CD4-positive, alpha-beta T cell (primary cell): ENCODE measurements at regions of chr9 and their contacts with region 1.

Region 1: DNA sequence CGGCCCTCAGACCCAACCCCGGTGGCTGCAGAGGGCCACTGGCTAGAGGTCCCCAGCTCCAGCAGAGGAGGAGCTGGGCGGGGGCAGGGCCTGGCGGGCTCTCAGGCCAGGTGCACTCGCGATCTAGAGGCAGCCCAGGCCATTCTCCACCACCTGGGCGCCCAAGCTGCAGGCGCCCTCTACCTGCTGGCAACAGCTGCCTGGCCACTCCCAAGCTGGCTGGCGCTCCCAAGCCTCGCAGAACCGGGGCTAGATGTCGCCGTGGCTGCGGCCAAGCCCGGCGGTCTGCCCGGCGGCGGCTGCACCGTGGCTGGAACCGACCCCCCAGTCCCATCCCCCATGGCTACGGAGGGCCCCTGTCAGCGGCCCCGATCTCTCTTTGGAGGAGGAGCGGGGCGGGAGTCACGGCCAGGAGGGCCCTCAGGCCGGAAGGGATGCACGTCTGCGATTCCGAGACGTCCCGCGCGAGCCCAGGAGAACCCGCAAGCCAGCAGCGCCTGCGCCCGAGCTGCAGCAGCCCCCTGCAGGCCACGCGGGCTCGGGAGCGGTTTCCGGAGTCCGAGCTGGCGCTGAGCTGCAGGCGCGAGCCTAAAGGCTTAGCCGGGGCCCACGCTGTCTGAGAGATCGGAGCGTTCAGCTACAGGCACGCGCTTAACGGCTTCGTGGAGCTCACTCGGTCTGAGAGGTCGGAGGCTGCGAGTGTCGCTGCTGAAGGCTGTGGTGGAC is 44.3 kb upstream of the BICD2 start:
- DNase-seq: peak; percentile 17 to 72 (median 38)
- ATAC-seq: peak; percentile 63
- H3K4me3 ChIP-seq: peak overlapping the region; percentile 49
- H3K4me3 Mint-ChIP-seq: peak overlapping the region; percentile 91
- H3K27ac ChIP-seq: no peak overlapping the region
- H3K27ac Mint-ChIP-seq: no peak overlapping the region
- H3K4me1 ChIP-seq: peaks cover 32% of the 10 kb centered on the region
- H3K4me1 Mint-ChIP-seq: peaks cover 14% of the 10 kb centered on the region
- H3K27me3 ChIP-seq: peaks cover 45 to 70% of the 10 kb centered on the region in 2 experiments
- H3K27me3 Mint-ChIP-seq: peaks cover 68% of the 10 kb centered on the region
- CTCF ChIP-seq: no peak

Region 2: GRCh38 chr9:92680166-92681119 is 128.4 kb before region 1 on chr9:
- CTCF ChIA-PET with region 1: no interaction called
- POLR2A ChIA-PET with region 1: no interaction called
- intact Hi-C with region 1: no loop called
- DNase-seq: no peak
- ATAC-seq: no peak
- H3K4me3 ChIP-seq: no peak overlapping the region
- H3K4me3 Mint-ChIP-seq: no peak overlapping the region
- H3K27ac ChIP-seq: no peak overlapping the region
- H3K27ac Mint-ChIP-seq: no peak overlapping the region
- H3K4me1 ChIP-seq: no peaks in the 10 kb centered on the region
- H3K4me1 Mint-ChIP-seq: peaks cover 5% of the 10 kb centered on the region
- H3K27me3 ChIP-seq: no peaks in the 10 kb centered on the region
- H3K27me3 Mint-ChIP-seq: no peaks in the 10 kb centered on the region
- CTCF ChIP-seq: no peak

Region 3: GRCh38 chr9:92696619-92697018 is 112.3 kb before region 1 on chr9:
- CTCF ChIA-PET with region 1: no interaction called
- POLR2A ChIA-PET with region 1: no interaction called
- intact Hi-C with region 1: no loop called
- DNase-seq: no peak
- ATAC-seq: no peak
- H3K4me3 ChIP-seq: no peak overlapping the region
- H3K4me3 Mint-ChIP-seq: no peak overlapping the region
- H3K27ac ChIP-seq: no peak overlapping the region
- H3K27ac Mint-ChIP-seq: no peak overlapping the region
- H3K4me1 ChIP-seq: no peaks in the 10 kb centered on the region
- H3K4me1 Mint-ChIP-seq: peaks cover 4% of the 10 kb centered on the region
- H3K27me3 ChIP-seq: no peaks in the 10 kb centered on the region
- H3K27me3 Mint-ChIP-seq: no peaks in the 10 kb centered on the region
- CTCF ChIP-seq: no peak

Region 4: DNA sequence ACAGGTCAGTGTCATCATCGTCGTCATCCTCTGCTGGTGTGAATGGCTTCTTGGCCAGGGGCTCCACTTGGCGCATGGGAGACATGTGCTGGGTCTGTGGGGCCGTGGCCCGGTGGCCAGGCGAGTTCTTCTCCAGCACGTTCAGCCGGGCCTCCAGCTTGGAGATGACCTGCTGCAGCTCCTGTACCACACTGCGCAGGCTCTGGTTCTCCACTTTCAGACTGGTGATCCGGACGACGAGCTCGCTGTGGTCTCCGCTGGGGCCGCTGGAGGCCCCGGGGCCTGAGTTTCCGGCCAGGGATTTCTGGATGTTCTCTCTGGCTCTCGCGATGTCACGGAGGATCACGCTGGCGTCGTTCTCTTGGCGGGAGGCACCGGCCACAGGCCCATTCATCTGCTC is 28.3 kb after region 1 on chr9:
- CTCF ChIA-PET with region 1: no interaction called
- POLR2A ChIA-PET with region 1: no interaction called
- intact Hi-C with region 1: no loop called
- DNase-seq: no peak
- ATAC-seq: no peak
- H3K4me3 ChIP-seq: no peak overlapping the region
- H3K4me3 Mint-ChIP-seq: no peak overlapping the region
- H3K27ac ChIP-seq: no peak overlapping the region
- H3K27ac Mint-ChIP-seq: no peak overlapping the region
- H3K4me1 ChIP-seq: no peaks in the 10 kb centered on the region
- H3K4me1 Mint-ChIP-seq: no peaks in the 10 kb centered on the region
- H3K27me3 ChIP-seq: no peaks in the 10 kb centered on the region
- H3K27me3 Mint-ChIP-seq: no peaks in the 10 kb centered on the region
- CTCF ChIP-seq: no peak

Region 5: GRCh38 chr9:92887880-92888338 is 79.0 kb after region 1 on chr9:
- CTCF ChIA-PET with region 1: no interaction called
- POLR2A ChIA-PET with region 1: no interaction called
- intact Hi-C with region 1: loop called in 1 of 2 experiments (anchors 2 kb)
- DNase-seq: peak in 8 of 14 experiments; percentile 11 to 70 (median 38)
- ATAC-seq: peak; percentile 66
- H3K4me3 ChIP-seq: no peak overlapping the region
- H3K4me3 Mint-ChIP-seq: peak overlapping the region; percentile 77
- H3K27ac ChIP-seq: no peak overlapping the region
- H3K27ac Mint-ChIP-seq: peak overlapping the region; percentile 86
- H3K4me1 ChIP-seq: peaks cover 36% of the 10 kb centered on the region
- H3K4me1 Mint-ChIP-seq: peaks cover 86% of the 10 kb centered on the region
- H3K27me3 ChIP-seq: no peaks in the 10 kb centered on the region
- H3K27me3 Mint-ChIP-seq: no peaks in the 10 kb centered on the region
- CTCF ChIP-seq: no peak